Heart right ventricle (tissue), 16 donors: ENCODE measurements at regions of chr2 and their contacts with region 1.

Region 1: DNA sequence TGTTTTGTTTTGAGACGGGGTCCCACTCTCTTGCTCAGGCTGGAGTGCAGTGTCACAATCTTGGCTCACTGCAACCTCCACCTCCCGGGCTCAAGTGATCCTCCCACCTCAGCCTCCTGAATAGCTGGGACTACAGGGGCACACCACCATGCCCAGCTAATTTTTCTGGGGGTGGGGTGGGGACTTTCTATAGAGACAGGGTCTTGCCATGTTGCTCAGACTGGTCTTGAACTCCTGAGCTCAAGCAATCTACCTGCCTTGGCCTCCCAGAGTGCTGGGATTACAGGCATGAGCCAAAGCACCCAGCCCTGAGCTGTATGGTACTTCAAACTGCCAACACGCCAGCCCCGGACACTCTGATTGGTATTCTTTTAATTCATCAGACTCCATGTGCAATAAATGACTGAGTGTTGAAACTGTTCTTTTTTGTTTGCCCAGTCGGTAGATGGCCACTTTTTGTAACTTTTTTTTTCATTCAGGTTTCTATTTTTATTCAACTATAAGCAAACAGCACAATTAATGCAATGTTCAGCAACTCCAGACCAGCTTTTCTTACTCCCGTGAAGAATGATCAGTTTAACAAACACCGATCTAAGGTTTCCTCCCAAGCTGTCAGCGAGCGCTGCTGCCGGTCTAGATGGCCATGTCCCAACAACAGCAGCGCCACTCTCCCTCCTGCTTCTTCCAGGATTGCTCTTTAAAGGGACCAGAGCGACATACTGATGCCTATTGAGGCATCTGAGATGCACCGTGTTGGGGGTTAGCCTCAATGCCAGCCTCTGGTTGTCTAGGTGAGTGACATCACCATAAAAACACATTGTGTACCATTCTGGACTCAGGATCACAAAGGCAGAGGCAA is 12.5 kb upstream of the TGOLN2 start:
- DNase-seq: no peak
- ATAC-seq: peak in 1 of 8 donors; percentile 17
- H3K4me3 ChIP-seq: no peak overlapping the region
- H3K27ac ChIP-seq: no peak overlapping the region
- H3K4me1 ChIP-seq: no peaks in the 10 kb centered on the region
- H3K27me3 ChIP-seq: peaks cover 0 to 3% (median 0%) of the 10 kb centered on the region in 7 donors
- CTCF ChIP-seq: no peak

Region 2: GRCh38 chr2:85318222-85319074 is 21.8 kb before region 1 on chr2:
- intact Hi-C with region 1: loop called in 4 of 10 experiments (anchors 1 to 2 kb)
- DNase-seq: no peak
- ATAC-seq: peak in 3 of 8 donors; percentile 16 to 26 (median 22)
- H3K4me3 ChIP-seq: no peak overlapping the region
- H3K27ac ChIP-seq: no peak overlapping the region
- H3K4me1 ChIP-seq: peaks cover 0 to 57% (median 30%) of the 10 kb centered on the region in 9 donors
- H3K27me3 ChIP-seq: no peaks in the 10 kb centered on the region
- CTCF ChIP-seq: no peak

Region 3: DNA sequence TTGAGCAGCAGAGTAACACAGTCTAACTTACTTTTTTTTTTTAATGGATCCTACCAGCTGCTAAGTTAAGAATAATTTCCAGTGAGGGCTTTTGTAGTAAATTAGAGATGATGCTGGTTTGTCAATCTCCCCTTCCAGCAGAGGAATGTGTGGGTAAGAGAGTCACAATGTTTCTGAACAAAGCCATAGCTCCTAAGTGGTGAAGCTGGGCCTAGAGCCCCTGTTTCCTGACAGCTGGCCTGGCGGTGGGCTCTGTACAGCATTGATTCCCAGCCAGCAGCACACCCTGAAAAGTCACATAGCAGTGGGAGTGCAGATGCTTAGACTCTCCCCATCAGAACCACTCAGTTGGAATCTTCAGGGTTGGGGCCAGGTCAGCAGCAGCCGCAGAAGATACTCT is 45.5 kb after region 1 on chr2:
- intact Hi-C with region 1: loop called in 1 of 10 experiments (anchors 1 kb)
- DNase-seq: no peak
- ATAC-seq: no peak
- H3K4me3 ChIP-seq: no peak overlapping the region
- H3K27ac ChIP-seq: no peak overlapping the region
- H3K4me1 ChIP-seq: no peaks in the 10 kb centered on the region
- H3K27me3 ChIP-seq: no peaks in the 10 kb centered on the region
- CTCF ChIP-seq: no peak

Region 4: DNA sequence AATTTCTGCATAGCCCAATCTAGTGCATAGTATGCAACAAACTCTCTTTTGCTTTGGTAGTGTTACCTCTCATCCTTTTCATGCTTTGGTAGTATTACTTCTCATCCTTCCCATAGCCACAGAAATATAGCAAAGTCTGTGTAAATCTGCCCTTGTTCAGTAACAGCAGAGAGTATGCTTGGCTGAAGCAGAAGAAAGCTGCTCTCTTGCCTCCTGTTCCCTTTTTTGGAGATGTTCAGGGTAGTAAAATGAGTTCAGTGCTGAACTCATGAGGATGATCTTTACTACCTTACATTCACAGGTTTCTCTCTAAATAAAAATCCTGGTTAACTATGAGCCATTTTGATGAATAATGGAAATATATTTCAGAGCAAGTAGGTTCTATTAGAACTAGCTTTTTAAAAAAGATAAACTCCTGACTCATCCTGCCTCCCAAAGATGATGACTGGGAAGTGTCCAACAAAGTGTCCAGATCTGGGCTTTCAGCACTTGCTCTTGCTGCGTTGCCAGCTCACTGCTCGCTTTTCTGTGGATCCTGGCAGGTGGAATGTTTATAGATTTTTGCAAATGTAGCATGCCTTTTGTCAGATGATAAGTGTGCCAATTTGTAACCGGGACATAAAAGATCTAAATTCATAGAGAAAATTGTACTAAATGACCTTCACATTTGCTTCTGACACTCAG is 1252.4 kb after region 1 on chr2:
- intact Hi-C with region 1: no loop called
- DNase-seq: peak in 1 of 2 donors; percentile 37
- ATAC-seq: peak in 3 of 8 donors; percentile 54 to 67 (median 57)
- H3K4me3 ChIP-seq: no peak overlapping the region
- H3K27ac ChIP-seq: peak overlapping the region in 7 of 10 donors; percentile 14 to 61 (median 33)
- H3K4me1 ChIP-seq: peaks cover 0 to 32% (median 8%) of the 10 kb centered on the region in 9 donors
- H3K27me3 ChIP-seq: no peaks in the 10 kb centered on the region
- CTCF ChIP-seq: no peak